Activated naive CD4-positive, alpha-beta T cell treated with anti-CD3 and anti-CD28 coated beads, Interleukin-2, amount 10 ng/mL, durations not matched to agents 7 days and 5 days (primary cell): ENCODE measurements at regions of chr22 and their contacts with region 1.

Region 1: DNA sequence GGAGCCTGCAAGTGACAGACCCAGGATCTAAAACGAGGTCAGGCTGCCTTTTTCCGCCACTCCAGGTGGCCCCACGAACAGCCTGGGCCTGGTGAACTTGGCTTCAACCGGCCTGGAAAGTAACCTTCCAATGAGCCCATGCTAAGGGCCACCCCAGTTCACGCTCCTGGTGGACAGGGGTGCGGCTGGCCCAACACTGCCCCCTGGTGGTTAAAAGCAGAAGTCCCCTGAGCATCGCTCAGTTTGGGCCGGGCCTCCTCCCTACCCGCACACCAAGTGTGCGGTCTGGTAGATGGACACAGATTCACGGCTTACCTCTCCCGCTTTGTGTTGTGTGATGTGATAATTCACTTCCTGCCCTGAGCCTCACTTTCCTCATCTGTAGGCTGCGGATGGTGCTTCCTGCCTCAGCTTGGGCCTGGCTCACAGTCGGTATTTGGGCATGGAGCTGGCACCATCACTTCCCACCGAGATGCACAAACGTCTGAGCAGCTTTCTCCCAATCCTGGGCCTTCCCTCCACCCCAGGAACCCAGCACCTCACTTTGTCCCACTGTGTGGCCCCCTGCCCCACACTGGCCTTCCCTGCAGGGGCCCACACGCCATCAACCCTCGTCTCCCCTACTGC is 13.7 kb upstream of the SEC14L3 start:
- DNase-seq: peak; percentile 83
- H3K4me3 Mint-ChIP-seq: no peak overlapping the region
- H3K27ac Mint-ChIP-seq: no peak overlapping the region
- H3K4me1 Mint-ChIP-seq: no peaks in the 10 kb centered on the region
- H3K27me3 Mint-ChIP-seq: peaks cover 24% of the 10 kb centered on the region

Region 2: DNA sequence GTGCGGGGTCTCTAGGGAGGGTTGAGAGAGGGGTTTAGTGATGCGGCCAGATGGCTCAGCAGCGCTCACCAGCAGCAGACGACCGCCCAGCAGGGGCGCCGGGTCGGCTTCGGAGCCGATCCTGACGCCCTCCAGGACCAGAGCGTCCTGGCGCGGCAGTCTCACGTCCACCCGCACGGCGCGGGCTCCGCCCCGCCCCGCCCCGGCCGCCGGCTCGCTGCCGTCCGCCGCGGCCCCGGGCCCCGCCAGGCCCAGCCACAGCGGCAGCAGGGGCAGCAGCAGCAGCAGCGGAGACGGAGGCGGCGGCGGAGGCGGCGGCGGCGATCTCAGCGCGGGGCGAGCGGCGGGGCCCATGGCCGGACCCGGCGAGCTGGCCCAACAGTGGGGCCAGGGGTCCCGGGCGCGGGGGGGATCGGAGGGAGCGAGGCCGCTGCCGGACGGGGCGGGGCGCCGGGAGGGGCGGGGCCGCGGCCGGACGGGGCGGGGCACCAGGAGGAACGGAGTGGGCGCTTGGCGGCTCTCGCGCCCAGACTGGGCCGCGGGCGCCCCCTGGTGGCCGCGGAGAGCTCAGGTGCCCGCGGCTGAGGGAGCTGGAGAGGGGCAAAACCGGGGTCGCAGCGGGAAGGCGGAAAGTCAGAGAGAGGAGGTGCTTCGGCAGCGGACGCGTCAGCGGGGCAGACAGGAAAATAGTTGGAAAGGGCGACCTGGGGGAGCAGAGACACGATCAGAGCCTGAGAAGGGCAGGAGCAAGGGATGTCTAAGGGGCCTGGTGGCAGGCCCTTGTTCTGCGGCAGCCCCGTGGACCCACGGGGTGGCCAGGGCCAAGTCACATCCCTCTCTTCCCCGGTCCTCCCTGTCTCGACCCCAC is 98.3 kb before region 1 on chr22 and contains the start of gene RNF215:
- CTCF ChIA-PET with region 1: interaction called, 57 read pairs
- DNase-seq: peak; percentile 82
- H3K4me3 Mint-ChIP-seq: peak within 1 kb of the TSS; percentile 79
- H3K27ac Mint-ChIP-seq: peak within 1 kb of the TSS; percentile 76
- H3K4me1 Mint-ChIP-seq: peaks cover 31% of the 10 kb centered on the region
- H3K27me3 Mint-ChIP-seq: peaks cover 13% of the 10 kb centered on the region

Region 3: GRCh38 chr22:30444632-30445437 is 40.6 kb before region 1 on chr22:
- CTCF ChIA-PET with region 1: interaction called, 23 read pairs
- DNase-seq: peak; percentile 64
- H3K4me3 Mint-ChIP-seq: no peak overlapping the region
- H3K27ac Mint-ChIP-seq: no peak overlapping the region
- H3K4me1 Mint-ChIP-seq: peaks cover 33% of the 10 kb centered on the region
- H3K27me3 Mint-ChIP-seq: peaks cover 65% of the 10 kb centered on the region

Region 4: DNA sequence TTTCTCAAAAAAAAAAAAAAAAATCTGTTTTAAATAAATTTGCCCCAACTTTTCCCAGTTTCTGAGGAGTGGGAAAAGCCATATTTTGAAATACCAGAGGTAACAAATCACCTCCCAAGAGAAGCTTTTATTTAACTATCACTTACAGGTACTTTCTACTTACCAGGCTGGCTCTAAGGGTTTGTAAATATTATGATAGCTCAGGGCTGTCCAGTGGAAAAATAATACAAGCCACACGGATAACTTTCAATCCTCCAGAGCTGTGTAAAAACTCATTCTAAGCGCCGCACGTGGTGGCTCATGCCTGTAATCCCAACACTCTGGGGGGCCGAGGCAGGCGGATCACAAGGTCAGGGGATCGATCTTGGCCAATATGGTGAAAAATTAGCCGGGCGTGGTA is 25.6 kb after region 1 on chr22:
- CTCF ChIA-PET with region 1: no interaction called
- DNase-seq: no peak
- H3K4me3 Mint-ChIP-seq: no peak overlapping the region
- H3K27ac Mint-ChIP-seq: no peak overlapping the region
- H3K4me1 Mint-ChIP-seq: no peaks in the 10 kb centered on the region
- H3K27me3 Mint-ChIP-seq: peaks cover 17% of the 10 kb centered on the region